CD4-positive, alpha-beta T cell (primary cell): ENCODE measurements at regions of chr2 and their contacts with region 1.

Region 1: GRCh38 chr2:233718552-233718951 is at the start of gene UGT1A4:
- DNase-seq: no peak
- ATAC-seq: no peak
- H3K4me3 ChIP-seq: no peak within 1 kb of the TSS
- H3K4me3 Mint-ChIP-seq: no peak within 1 kb of the TSS
- H3K27ac ChIP-seq: no peak within 1 kb of the TSS
- H3K27ac Mint-ChIP-seq: no peak within 1 kb of the TSS
- H3K4me1 ChIP-seq: no peaks in the 10 kb centered on the region
- H3K4me1 Mint-ChIP-seq: no peaks in the 10 kb centered on the region
- H3K27me3 ChIP-seq: peaks cover 0 to 10% of the 10 kb centered on the region in 2 experiments
- H3K27me3 Mint-ChIP-seq: peaks cover 41% of the 10 kb centered on the region
- CTCF ChIP-seq: no peak
- total RNA-seq, gene UGT1A4: not detected

Region 2: DNA sequence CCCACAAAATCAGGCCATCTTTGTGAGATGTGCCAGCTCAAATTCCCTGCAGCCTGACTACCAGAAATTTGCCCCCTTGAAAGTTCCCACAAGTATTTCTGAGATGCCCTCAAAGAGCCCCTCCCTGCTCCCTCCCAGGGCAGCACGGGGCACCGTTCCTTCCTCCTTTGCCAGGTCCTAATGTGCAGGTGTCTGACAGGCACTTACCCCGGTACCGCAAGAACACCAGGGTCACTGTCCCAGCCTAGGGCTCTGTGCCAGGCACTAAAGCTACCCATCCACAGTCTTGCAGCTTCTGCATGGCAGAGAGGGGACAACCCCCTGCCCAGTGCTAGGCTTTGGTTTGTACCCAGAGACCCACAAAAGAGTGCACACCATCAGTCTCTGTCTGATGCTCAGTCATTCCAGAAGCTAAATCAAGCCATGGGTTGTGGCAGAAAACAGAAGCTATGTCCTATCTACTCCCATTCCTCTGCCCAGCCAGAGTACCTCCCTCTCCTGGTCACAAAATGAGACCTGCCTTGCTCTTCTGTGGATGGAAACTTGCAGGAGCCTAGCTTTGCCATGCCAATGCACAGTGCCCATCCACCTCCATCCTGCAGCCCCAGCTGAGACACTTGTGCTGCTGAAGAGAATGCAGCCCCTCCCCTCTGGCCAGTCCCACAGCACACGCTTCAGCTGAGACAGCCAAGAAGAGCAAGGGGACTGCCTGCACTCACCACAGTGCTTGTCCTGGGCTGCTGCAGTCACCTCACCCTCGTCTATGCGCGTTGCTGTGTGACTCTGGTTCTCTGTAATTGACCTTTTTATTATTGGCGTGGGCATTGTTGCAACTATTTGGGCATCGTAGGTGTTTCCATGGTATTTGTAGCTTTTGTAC is 609.7 kb before region 1 on chr2:
- CTCF ChIA-PET with region 1: no interaction called
- POLR2A ChIA-PET with region 1: no interaction called
- intact Hi-C with region 1: no loop called
- DNase-seq: no peak
- ATAC-seq: no peak
- H3K4me3 ChIP-seq: no peak overlapping the region
- H3K4me3 Mint-ChIP-seq: no peak overlapping the region
- H3K27ac ChIP-seq: no peak overlapping the region
- H3K27ac Mint-ChIP-seq: peak overlapping the region; percentile 56
- H3K4me1 ChIP-seq: peaks cover 76% of the 10 kb centered on the region
- H3K4me1 Mint-ChIP-seq: peaks cover 83% of the 10 kb centered on the region
- H3K27me3 ChIP-seq: no peaks in the 10 kb centered on the region
- H3K27me3 Mint-ChIP-seq: no peaks in the 10 kb centered on the region
- CTCF ChIP-seq: no peak

Region 3: DNA sequence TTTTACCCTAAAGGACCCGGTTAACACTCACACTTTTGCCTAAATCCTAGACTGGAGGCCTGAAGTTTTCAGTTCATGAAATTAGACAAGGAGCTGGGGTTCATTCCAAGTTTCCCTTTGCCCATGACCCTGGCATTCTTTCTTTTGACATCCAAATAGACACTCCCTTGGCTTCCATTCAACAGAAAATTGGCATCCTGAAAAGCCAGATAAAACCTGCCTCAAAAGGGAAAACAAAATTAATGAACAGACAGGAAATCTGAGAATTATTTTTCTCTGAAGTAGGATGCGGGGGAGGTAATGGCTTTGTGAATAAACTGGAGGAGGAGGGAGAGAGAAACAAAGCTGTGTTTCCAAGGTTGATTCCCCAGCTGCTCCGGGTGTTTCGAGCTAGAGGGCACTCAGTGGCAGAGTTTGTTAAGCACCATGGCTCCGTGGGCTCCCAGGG is 372.9 kb after region 1 on chr2:
- CTCF ChIA-PET with region 1: no interaction called
- POLR2A ChIA-PET with region 1: no interaction called
- intact Hi-C with region 1: loop called in 1 of 2 experiments (anchors 5 kb)
- DNase-seq: no peak
- ATAC-seq: no peak
- H3K4me3 ChIP-seq: no peak overlapping the region
- H3K4me3 Mint-ChIP-seq: no peak overlapping the region
- H3K27ac ChIP-seq: no peak overlapping the region
- H3K27ac Mint-ChIP-seq: no peak overlapping the region
- H3K4me1 ChIP-seq: peaks cover 2% of the 10 kb centered on the region
- H3K4me1 Mint-ChIP-seq: no peaks in the 10 kb centered on the region
- H3K27me3 ChIP-seq: no peaks in the 10 kb centered on the region
- H3K27me3 Mint-ChIP-seq: no peaks in the 10 kb centered on the region
- CTCF ChIP-seq: no peak